ENCODE measurements at regions of chr10 and their contacts with region 1.

Region 1: DNA sequence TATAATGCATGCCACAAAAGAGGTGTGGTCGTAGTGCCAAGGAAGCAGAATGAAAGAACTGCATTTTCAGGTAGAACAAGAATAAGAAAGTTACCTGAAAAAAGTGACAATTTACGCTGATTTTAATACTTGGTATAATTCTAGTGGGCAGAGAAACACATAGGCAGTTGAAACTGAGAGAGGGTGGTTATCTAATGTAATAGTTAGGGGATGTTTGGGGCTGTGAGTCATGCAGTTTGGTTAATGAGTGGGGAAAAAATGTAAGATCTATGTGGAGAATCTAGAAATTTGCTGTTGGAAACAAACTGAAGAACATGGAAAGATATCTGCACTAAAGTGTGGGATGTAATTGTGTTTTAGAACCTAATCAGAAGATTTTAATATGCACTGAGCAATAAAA is 33.7 kb downstream of the ZNF37A start:
- DNase-seq: no peak
- ATAC-seq: no peak
- H3K4me3 ChIP-seq: no peak overlapping the region
- H3K27ac ChIP-seq: no peak overlapping the region
- H3K4me1 ChIP-seq: no peaks in the 10 kb centered on the region
- H3K27me3 ChIP-seq: no peaks in the 10 kb centered on the region
- CTCF ChIP-seq: no peak

Region 2: GRCh38 chr10:38112159-38112558 is 15.7 kb before region 1 on chr10:
- intact Hi-C with region 1: no loop called
- DNase-seq: no peak
- ATAC-seq: peak in 5 of 8 donors; percentile 35 to 76 (median 38)
- H3K4me3 ChIP-seq: no peak overlapping the region
- H3K27ac ChIP-seq: peak overlapping the region in 1 of 10 donors; percentile 32
- H3K4me1 ChIP-seq: no peaks in the 10 kb centered on the region
- H3K27me3 ChIP-seq: no peaks in the 10 kb centered on the region
- CTCF ChIP-seq: no peak

Region 3: GRCh38 chr10:38156416-38157269 is 28.8 kb after region 1 on chr10:
- intact Hi-C with region 1: loop called in 1 of 10 experiments (anchors 1 kb)
- DNase-seq: no peak
- ATAC-seq: no peak
- H3K4me3 ChIP-seq: no peak overlapping the region
- H3K27ac ChIP-seq: no peak overlapping the region
- H3K4me1 ChIP-seq: no peaks in the 10 kb centered on the region
- H3K27me3 ChIP-seq: no peaks in the 10 kb centered on the region
- CTCF ChIP-seq: no peak